ENCODE measurements at regions of chr9 and their contacts with region 1.

Region 1: GRCh38 chr9:6055213-6055612 is 39.8 kb upstream of the RANBP6 start:
- DNase-seq: peak; percentile 44
- CTCF ChIP-seq: peak; percentile 65

Region 2: GRCh38 chr9:5783982-5784381 is 271.2 kb before region 1 on chr9:
- in situ Hi-C with region 1: no loop called
- DNase-seq: no peak
- CTCF ChIP-seq: no peak

Region 3: DNA sequence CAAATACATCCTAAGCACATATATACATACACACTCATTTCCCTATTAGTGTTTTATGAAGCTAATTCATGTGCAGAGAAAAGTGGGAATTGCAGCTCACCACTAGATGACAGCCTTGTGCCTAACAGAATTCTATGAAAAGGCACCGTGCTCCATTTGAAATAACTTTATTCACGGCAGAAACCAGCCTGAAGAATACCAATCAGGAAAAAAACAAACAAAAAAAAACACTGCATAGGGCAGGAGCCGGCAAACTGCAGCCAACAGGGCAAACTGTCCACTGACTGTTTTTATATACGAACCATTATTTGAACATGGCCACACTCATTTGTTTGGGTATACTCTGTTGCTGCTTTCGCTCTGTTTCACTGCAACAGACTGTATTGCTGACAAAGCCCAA is 255.9 kb before region 1 on chr9:
- in situ Hi-C with region 1: no loop called
- DNase-seq: no peak
- CTCF ChIP-seq: peak; percentile 58

Region 4: GRCh38 chr9:5851445-5851844 is 203.8 kb before region 1 on chr9:
- in situ Hi-C with region 1: no loop called
- DNase-seq: peak; percentile 78
- CTCF ChIP-seq: no peak

Region 5: GRCh38 chr9:6305954-6306563 is 250.8 kb after region 1 on chr9:
- in situ Hi-C with region 1: loop called (anchors 10 kb)
- DNase-seq: peak; percentile 33
- CTCF ChIP-seq: peak; percentile 61

Region 6: GRCh38 chr9:6739218-6739617 is 684.0 kb after region 1 on chr9:
- in situ Hi-C with region 1: no loop called
- DNase-seq: no peak
- CTCF ChIP-seq: peak; percentile 45